GM10248 (cell line): ENCODE measurements at regions of chr5 and their contacts with region 1.

Region 1: DNA sequence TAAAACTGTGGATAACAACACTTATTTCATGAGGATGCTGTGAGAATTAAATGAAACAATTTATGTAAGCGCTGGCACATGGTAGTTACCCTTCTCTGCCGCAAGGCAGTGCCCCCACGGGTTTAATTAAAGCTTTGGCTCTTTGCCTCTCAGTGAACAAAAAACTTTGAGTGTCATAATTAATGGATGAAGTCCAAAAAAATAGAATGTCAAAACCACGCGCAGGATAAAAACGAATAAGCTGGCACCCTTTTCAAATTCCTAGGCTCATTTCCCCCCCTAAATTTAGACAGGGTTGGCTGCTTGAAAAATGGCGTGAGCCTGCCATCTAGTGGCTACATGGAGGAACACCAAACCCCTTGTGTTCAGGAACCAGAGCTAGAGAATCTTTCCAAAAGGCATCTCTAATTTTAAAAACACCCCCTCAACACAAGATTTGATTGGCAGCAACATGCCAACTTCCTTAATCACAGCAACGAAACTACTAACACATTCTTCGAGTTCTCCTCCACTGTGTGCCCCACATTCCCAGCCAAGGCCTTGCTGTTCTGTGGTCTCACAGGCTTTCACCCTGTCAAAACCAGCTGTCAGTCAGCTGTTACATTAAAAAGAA is 29.0 kb upstream of the CCNG1 start:
- DNase-seq: peak; percentile 57
- CTCF ChIP-seq: peak; percentile 83

Region 2: DNA sequence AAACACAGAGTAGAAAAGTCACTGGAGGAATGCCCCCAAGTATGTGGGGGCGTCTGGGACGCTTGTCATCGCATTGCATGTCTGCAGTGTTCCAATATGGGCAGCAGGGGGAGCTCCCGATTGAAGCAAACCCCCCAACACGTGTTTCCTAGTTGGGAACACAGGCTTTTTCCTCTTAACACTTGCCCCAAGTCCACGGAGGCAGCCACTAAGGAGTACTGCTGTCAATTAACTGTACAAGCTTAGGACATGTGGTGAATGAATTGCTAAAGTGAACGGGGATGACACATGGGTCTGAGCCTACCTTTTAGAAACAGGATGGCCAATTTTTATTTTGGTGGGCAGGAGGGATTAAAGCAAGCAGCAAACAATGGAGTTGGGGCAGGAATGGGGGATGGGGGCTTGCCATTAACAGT is 1864.1 kb before region 1 on chr5:
- CTCF ChIA-PET with region 1: interaction called, 10 read pairs
- POLR2A ChIA-PET with region 1: no interaction called
- DNase-seq: peak; percentile 50
- CTCF ChIP-seq: peak; percentile 76

Region 3: GRCh38 chr5:163104464-163104863 is 304.0 kb before region 1 on chr5:
- CTCF ChIA-PET with region 1: interaction called, 11 read pairs
- POLR2A ChIA-PET with region 1: no interaction called
- DNase-seq: no peak
- CTCF ChIP-seq: peak; percentile 19

Region 4: GRCh38 chr5:163347671-163348070 is 60.7 kb before region 1 on chr5:
- CTCF ChIA-PET with region 1: interaction called, 32 read pairs
- POLR2A ChIA-PET with region 1: no interaction called
- DNase-seq: peak; percentile 60
- CTCF ChIP-seq: peak; percentile 90

Region 5: DNA sequence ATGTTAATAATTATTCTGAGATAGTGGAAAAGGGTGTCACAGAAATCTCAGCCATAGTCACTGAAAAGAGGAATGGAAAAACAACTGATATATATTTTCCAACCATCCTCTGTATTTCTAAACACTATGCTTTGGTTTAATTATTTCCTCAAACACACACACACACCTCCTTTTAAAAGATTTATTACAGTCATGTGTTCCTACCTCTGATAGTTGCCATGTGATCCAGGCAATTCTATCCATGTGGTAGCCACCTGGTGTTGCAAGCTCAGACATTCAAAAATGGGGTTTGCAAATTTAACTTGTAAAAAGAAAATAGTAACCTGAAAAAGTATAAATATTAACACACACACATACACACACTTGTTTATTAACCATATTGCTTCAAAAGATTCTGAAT is 11.1 kb before region 1 on chr5:
- CTCF ChIA-PET with region 1: interaction called, 23 read pairs
- POLR2A ChIA-PET with region 1: no interaction called
- DNase-seq: no peak
- CTCF ChIP-seq: no peak